A549 (cell line): ENCODE measurements at regions of chr7 and their contacts with region 1.

Region 1: DNA sequence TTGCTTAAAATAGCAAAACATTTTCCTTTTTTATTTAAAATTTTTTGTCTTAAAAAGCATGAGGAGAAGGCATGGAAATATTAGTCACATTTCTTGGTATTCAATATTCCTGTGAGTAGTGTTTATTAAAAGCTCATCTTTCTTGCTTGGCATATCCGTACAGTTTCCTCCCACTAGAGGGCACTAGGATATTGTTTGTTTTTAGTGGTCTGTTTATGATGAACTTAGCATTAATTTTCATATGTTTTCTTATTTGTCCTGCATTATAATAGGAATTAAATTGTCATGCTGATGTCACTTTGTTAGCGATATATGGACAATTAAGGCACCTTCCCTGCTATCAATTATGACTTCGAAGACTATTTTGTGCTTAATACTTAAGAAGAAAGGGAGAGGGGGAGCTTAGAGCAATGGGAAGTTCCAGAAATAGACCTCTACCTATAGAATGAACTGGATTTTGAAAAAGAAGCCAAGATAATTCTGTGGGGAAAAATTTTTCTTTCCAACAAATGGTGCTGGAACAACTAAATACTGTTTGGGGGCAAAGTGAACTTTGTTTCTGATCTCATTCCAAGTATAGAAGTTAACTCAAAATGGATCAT is 91.0 kb upstream of the STRIP2 start:
- DNase-seq: peak; percentile 36 to 57
- ATAC-seq: peak; percentile 62 to 81; a peak in 3 of 6 replicates
- H3K4me3 ChIP-seq: no peak overlapping the region
- H3K27ac ChIP-seq: no peak overlapping the region
- H3K4me1 ChIP-seq: no peaks in the 10 kb centered on the region
- CTCF ChIP-seq: peak; percentile 79
- EP300 ChIP-seq: no peak
- POLR2A ChIP-seq: no peak
- RAD21 ChIP-seq: peak; percentile 64 to 66; a peak in 4 of 5 replicates

Region 2: DNA sequence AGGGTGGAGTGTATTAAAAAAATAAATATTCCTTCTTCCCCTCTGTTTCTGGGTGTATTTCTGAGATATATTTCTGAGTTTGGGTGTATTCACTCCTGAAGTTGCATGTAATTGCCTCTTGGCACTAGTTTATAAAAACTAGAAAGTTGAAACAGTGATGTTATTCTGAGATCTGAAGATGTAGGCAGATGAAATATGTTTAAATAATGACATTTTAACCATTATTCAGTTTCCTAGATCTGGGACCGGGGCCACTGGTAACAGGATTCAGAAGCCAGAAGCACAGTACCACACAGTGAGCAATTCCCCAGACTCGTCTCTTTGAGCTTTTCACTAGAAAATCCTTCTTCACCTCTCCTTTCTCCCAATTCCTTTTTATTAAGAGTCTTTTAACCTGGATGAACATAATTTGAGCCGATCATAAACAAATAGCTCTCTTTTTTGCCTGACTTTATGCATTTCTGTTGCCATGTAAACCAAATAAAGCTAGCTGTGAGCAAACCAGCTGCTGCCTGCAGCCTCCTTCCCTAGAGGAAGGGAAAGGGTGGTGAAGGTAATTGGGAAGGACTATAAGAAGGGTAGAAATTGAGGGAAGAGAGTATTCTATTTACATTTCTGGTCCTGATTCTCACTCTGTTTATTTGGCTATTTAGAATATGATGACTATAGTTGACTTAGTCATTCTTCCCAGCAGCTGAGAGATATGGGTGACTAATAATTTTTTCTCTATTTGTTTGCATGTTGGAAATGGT is 10.7 kb before region 1 on chr7:
- CTCF ChIA-PET with region 1: interaction called, 22 read pairs
- POLR2A ChIA-PET with region 1: no interaction called
- DNase-seq: peak; percentile 21 to 37
- ATAC-seq: peak; percentile 89 to 90
- H3K4me3 ChIP-seq: no peak overlapping the region
- H3K27ac ChIP-seq: peak overlapping the region in 1 of 2 experiments; percentile 53; a peak in 3 of 6 replicates
- H3K4me1 ChIP-seq: peaks cover 16% of the 10 kb centered on the region
- CTCF ChIP-seq: no peak
- EP300 ChIP-seq: no peak
- POLR2A ChIP-seq: no peak
- RAD21 ChIP-seq: no peak